ENCODE measurements at regions of chr1 and their contacts with region 1.

Region 1: GRCh38 chr1:212477014-212477679 is 44.4 kb downstream of the NENF start:
- DNase-seq: peak; percentile 83
- ATAC-seq: peak; percentile 91
- H3K4me3 Mint-ChIP-seq: no peak overlapping the region
- H3K27ac Mint-ChIP-seq: no peak overlapping the region
- H3K4me1 Mint-ChIP-seq: peaks cover 25% of the 10 kb centered on the region
- H3K27me3 Mint-ChIP-seq: peaks cover 19% of the 10 kb centered on the region

Region 2: GRCh38 chr1:212368073-212368484 is 109.1 kb before region 1 on chr1:
- CTCF ChIA-PET with region 1: no interaction called
- POLR2A ChIA-PET with region 1: no interaction called
- DNase-seq: peak; percentile 76
- ATAC-seq: peak; percentile 92
- H3K4me3 Mint-ChIP-seq: no peak overlapping the region
- H3K27ac Mint-ChIP-seq: no peak overlapping the region
- H3K4me1 Mint-ChIP-seq: no peaks in the 10 kb centered on the region
- H3K27me3 Mint-ChIP-seq: no peaks in the 10 kb centered on the region

Region 3: GRCh38 chr1:212488397-212489283 is 11.5 kb after region 1 on chr1:
- CTCF ChIA-PET with region 1: interaction called, 11 read pairs
- POLR2A ChIA-PET with region 1: no interaction called
- DNase-seq: no peak
- ATAC-seq: peak; percentile 54
- H3K4me3 Mint-ChIP-seq: no peak overlapping the region
- H3K27ac Mint-ChIP-seq: no peak overlapping the region
- H3K4me1 Mint-ChIP-seq: no peaks in the 10 kb centered on the region
- H3K27me3 Mint-ChIP-seq: peaks cover 9% of the 10 kb centered on the region

Region 4: GRCh38 chr1:212595787-212596714 is 118.9 kb after region 1 on chr1:
- CTCF ChIA-PET with region 1: interaction called, 18 read pairs
- POLR2A ChIA-PET with region 1: interaction called, 3 read pairs
- DNase-seq: peak; percentile 72
- ATAC-seq: peak; percentile 96
- H3K4me3 Mint-ChIP-seq: peak overlapping the region; percentile 78
- H3K27ac Mint-ChIP-seq: peak overlapping the region; percentile 96
- H3K4me1 Mint-ChIP-seq: peaks cover 26% of the 10 kb centered on the region
- H3K27me3 Mint-ChIP-seq: peaks cover 22% of the 10 kb centered on the region

Region 5: DNA sequence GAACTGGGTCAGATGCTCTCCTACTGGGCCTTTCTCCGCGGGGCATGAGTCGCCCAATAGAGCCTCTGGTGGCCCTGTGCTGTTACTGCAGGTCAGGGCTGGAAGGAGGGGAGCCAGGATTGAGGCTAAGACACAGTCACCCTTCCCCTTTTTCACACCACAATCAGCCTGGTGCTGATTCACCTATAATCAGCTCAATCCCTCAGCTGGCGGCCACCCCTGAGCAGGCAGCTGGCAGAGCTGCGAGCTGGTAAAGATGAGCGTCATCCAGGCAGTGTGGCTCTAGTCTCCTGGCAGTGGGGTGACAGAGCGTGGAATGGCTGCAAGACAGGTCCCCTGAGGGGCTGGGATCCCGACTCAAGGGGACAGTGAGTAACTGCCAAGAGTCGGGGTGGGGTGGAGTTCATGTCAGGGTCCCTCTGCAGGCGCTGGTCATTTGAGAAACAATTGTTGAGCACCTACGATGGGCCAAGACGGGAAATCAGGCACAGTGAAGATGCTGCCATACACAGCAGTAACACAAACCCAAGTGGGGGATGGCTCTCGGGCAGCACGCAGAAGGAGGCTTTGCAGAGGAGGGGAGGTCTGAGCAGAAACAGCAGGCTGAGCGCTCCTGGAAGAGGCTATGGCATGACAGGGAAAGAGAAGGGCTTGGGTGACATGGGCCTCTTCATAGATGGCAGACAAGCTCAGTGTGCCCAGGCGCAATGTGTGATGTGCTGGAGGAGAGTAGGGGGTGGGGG is 153.2 kb after region 1 on chr1:
- CTCF ChIA-PET with region 1: interaction called, 17 read pairs
- POLR2A ChIA-PET with region 1: no interaction called
- DNase-seq: peak; percentile 68
- ATAC-seq: peak; percentile 81
- H3K4me3 Mint-ChIP-seq: no peak overlapping the region
- H3K27ac Mint-ChIP-seq: no peak overlapping the region
- H3K4me1 Mint-ChIP-seq: peaks cover 9% of the 10 kb centered on the region
- H3K27me3 Mint-ChIP-seq: peaks cover 4% of the 10 kb centered on the region

Region 6: GRCh38 chr1:212699104-212699624 is 222.0 kb after region 1 on chr1:
- CTCF ChIA-PET with region 1: interaction called, 15 read pairs
- POLR2A ChIA-PET with region 1: no interaction called
- DNase-seq: peak; percentile 64
- ATAC-seq: peak; percentile 82
- H3K4me3 Mint-ChIP-seq: peak overlapping the region; percentile 87
- H3K27ac Mint-ChIP-seq: peak overlapping the region; percentile 80
- H3K4me1 Mint-ChIP-seq: peaks cover 52% of the 10 kb centered on the region
- H3K27me3 Mint-ChIP-seq: peaks cover 5% of the 10 kb centered on the region

Region 7: DNA sequence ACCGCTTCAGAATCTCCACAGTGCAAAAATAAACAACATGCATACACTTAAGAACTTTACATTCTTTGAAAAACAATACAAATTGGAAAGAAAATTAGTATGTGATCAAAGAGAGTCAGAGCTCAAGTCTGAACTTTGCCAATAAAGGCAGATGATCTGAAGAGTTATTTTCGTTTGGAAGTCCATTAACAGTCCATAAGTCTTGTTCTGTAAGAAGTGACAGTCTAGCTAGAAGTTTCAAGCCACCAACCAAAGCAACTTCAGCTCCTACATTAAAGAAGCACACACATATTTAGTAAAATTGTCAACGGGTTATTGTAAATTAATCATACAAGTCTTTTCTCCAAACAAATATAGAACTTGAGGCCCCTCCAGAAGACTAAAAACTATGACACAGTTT is 517.8 kb after region 1 on chr1:
- CTCF ChIA-PET with region 1: interaction called, 12 read pairs
- POLR2A ChIA-PET with region 1: no interaction called
- DNase-seq: no peak
- ATAC-seq: no peak
- H3K4me3 Mint-ChIP-seq: no peak overlapping the region
- H3K27ac Mint-ChIP-seq: no peak overlapping the region
- H3K4me1 Mint-ChIP-seq: peaks cover 1% of the 10 kb centered on the region
- H3K27me3 Mint-ChIP-seq: no peaks in the 10 kb centered on the region

Measured in activated CD8-positive, alpha-beta T cell treated with anti-CD3 and anti-CD28 coated beads, Interleukin-2, amount 10 ng/mL, durations not matched to agents 7 days and 5 days (primary cell).